HepG2 (cell line): ENCODE measurements at regions of chr14 and their contacts with region 1.

Region 1: DNA sequence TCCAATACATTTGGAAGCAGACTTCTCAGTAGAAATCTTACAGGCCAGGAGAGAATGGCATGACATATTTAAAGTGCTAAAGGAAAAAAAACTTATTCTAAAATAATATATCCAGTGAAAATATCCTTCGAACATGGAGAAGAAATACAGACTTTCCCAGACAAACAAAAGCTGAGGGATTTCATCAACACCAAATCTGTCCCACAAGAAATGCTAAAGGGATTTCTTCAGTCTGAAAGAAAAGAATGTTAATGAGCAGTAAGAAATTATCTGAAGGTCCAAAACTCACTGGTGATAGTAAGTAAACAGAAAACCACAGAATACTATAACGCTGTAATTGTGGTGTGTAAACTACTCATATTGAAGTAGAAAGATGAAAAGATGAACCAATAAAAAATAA is 103.9 kb downstream of the INSM2 start:
- DNase-seq: no peak
- ATAC-seq: no peak
- H3K4me3 ChIP-seq: no peak overlapping the region
- H3K27ac ChIP-seq: no peak overlapping the region
- H3K4me1 ChIP-seq: no peaks in the 10 kb centered on the region
- H3K27me3 ChIP-seq: no peaks in the 10 kb centered on the region
- CTCF ChIP-seq: no peak
- EP300 ChIP-seq: no peak
- POLR2A ChIP-seq: no peak
- RAD21 ChIP-seq: no peak

Region 2: DNA sequence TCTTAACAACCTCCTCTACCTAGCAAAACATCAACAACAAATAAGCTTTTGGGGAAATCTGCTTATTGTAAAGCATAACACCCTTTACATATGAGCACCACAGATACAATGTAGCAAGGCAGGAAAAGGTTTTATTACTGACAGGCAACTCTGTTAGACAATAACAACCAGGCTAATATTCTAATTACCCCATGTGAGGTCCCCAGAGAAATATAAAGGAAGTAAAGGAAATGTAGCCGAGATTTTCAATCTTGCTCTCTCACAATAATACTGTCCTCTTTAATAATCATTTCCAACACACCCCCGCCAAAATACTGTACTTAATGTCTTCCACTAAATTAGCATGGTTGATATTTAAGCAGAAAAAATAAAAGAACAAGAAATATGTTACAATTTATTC is 117.9 kb before region 1 on chr14:
- CTCF ChIA-PET with region 1: no interaction called
- POLR2A ChIA-PET with region 1: no interaction called
- in situ Hi-C with region 1: no loop called
- intact Hi-C with region 1: loop called (anchors 1 kb)
- DNase-seq: no peak
- ATAC-seq: no peak
- H3K4me3 ChIP-seq: no peak overlapping the region
- H3K27ac ChIP-seq: no peak overlapping the region
- H3K4me1 ChIP-seq: no peaks in the 10 kb centered on the region
- H3K27me3 ChIP-seq: no peaks in the 10 kb centered on the region
- CTCF ChIP-seq: no peak
- EP300 ChIP-seq: no peak
- POLR2A ChIP-seq: no peak
- RAD21 ChIP-seq: no peak

Region 3: GRCh38 chr14:35594616-35595015 is 43.2 kb before region 1 on chr14:
- CTCF ChIA-PET with region 1: no interaction called
- POLR2A ChIA-PET with region 1: no interaction called
- in situ Hi-C with region 1: no loop called
- intact Hi-C with region 1: loop called (anchors 5 kb)
- DNase-seq: no peak
- ATAC-seq: no peak
- H3K4me3 ChIP-seq: no peak overlapping the region
- H3K27ac ChIP-seq: no peak overlapping the region
- H3K4me1 ChIP-seq: peaks cover 3% of the 10 kb centered on the region; the same call in 1 of the 2 replicates
- H3K27me3 ChIP-seq: no peaks in the 10 kb centered on the region
- CTCF ChIP-seq: no peak
- EP300 ChIP-seq: no peak
- POLR2A ChIP-seq: no peak
- RAD21 ChIP-seq: no peak

Region 4: GRCh38 chr14:36256126-36256801 is 618.4 kb after region 1 on chr14:
- CTCF ChIA-PET with region 1: no interaction called
- POLR2A ChIA-PET with region 1: no interaction called
- in situ Hi-C with region 1: no loop called
- intact Hi-C with region 1: no loop called
- DNase-seq: no peak
- ATAC-seq: no peak
- H3K4me3 ChIP-seq: no peak overlapping the region
- H3K27ac ChIP-seq: no peak overlapping the region
- H3K4me1 ChIP-seq: no peaks in the 10 kb centered on the region
- H3K27me3 ChIP-seq: peaks cover 0 to 22% of the 10 kb centered on the region in 2 experiments; a peak in 2 of 5 replicates
- CTCF ChIP-seq: no peak
- EP300 ChIP-seq: no peak
- POLR2A ChIP-seq: no peak
- RAD21 ChIP-seq: no peak